Prostate gland (tissue), 2 donors: ENCODE measurements at regions of chr6 and their contacts with region 1.

Region 1: DNA sequence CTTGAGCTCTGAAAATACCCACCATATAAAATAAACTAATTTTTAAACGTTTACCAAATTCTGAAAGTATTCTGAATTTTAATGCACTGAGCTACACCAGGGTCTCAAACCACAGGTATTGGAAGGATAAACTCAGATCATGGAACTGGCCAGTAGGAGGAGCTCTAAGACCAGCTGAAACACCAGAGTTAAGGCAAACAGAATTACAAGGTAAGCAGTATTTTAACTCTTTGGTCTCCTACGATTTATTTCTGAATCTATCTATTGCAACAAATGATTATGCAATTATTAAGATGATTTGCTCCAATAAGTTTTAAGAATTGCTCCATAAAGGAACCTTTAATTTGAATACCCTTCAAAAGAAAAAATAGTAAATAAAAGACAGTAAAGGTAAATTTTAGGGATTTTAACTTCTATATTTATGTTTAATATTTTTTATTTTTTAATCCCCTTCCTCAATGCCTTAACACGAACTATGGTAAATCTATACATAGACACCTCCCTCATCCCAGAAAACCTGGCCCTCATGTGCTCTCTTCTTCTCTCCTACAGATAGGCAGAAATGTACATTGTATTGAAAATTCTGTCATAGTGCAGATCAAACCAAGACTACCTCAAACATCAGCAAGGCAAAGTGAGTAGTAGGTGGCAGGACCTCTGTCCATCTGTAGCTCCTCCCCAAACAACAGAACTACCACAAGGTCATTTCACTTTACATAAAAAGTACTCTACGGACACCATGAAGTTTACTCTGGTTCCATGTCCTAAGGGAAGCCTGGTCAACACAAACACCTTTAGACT is 58.4 kb downstream of the SMLR1 start:
- DNase-seq: peak; percentile 77
- H3K4me3 ChIP-seq: no peak overlapping the region
- H3K27ac ChIP-seq: no peak overlapping the region
- H3K4me1 ChIP-seq: no peaks in the 10 kb centered on the region
- H3K27me3 ChIP-seq: no peaks in the 10 kb centered on the region
- CTCF ChIP-seq: peak; percentile 72 to 93 (median 88)
- POLR2A ChIP-seq: no peak

Region 2: DNA sequence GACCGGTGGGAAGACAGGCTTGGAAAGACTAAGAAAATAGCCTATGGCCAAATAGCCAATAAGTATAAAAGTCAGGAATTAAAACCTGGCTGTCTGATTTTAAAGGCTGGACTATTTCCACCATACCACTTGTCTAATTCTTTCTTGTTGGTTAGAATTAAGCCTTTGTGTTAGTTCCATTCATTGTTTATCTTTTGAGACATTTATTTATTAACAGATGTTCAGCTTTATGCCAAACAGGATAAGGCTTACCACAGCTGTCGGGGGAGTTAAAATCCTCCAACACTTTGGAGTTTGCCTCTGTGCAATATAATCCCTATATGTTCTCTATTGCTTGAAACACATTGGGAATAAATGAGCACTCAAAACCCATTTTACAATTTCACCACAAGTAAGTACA is 311.4 kb before region 1 on chr6:
- intact Hi-C with region 1: no loop called
- DNase-seq: no peak
- H3K4me3 ChIP-seq: no peak overlapping the region
- H3K27ac ChIP-seq: no peak overlapping the region
- H3K4me1 ChIP-seq: no peaks in the 10 kb centered on the region
- H3K27me3 ChIP-seq: no peaks in the 10 kb centered on the region
- CTCF ChIP-seq: no peak
- POLR2A ChIP-seq: no peak

Region 3: GRCh38 chr6:130933712-130934200 is 48.2 kb after region 1 on chr6:
- intact Hi-C with region 1: no loop called
- DNase-seq: no peak
- H3K4me3 ChIP-seq: no peak overlapping the region
- H3K27ac ChIP-seq: no peak overlapping the region
- H3K4me1 ChIP-seq: no peaks in the 10 kb centered on the region
- H3K27me3 ChIP-seq: no peaks in the 10 kb centered on the region
- CTCF ChIP-seq: no peak
- POLR2A ChIP-seq: no peak

Region 4: GRCh38 chr6:130961148-130961547 is 75.6 kb after region 1 on chr6:
- intact Hi-C with region 1: no loop called
- DNase-seq: no peak
- H3K4me3 ChIP-seq: no peak overlapping the region
- H3K27ac ChIP-seq: no peak overlapping the region
- H3K4me1 ChIP-seq: no peaks in the 10 kb centered on the region
- H3K27me3 ChIP-seq: no peaks in the 10 kb centered on the region
- CTCF ChIP-seq: no peak
- POLR2A ChIP-seq: no peak

Region 5: GRCh38 chr6:131063028-131063763 is 177.6 kb after region 1 on chr6 and contains the start of gene EPB41L2:
- intact Hi-C with region 1: loop called (anchors 5 kb)
- DNase-seq: peak; percentile 75
- H3K4me3 ChIP-seq: peak within 1 kb of the TSS; percentile 55 to 75
- H3K27ac ChIP-seq: peak within 1 kb of the TSS; percentile 63 to 80
- H3K4me1 ChIP-seq: no peaks in the 10 kb centered on the region
- H3K27me3 ChIP-seq: no peaks in the 10 kb centered on the region
- CTCF ChIP-seq: peak in 3 of 4 experiments; percentile 10 to 40 (median 35)
- POLR2A ChIP-seq: peak; percentile 86
- total RNA-seq, gene EPB41L2: 11.9 to 105 TPM

Region 6: GRCh38 chr6:131116749-131117360 is 231.3 kb after region 1 on chr6:
- intact Hi-C with region 1: loop called (anchors 2 kb)
- DNase-seq: no peak
- H3K4me3 ChIP-seq: no peak overlapping the region
- H3K27ac ChIP-seq: no peak overlapping the region
- H3K4me1 ChIP-seq: no peaks in the 10 kb centered on the region
- H3K27me3 ChIP-seq: no peaks in the 10 kb centered on the region
- CTCF ChIP-seq: peak in 3 of 4 experiments; percentile 53 to 75 (median 59)
- POLR2A ChIP-seq: no peak

Region 7: GRCh38 chr6:131167773-131168172 is 282.2 kb after region 1 on chr6:
- intact Hi-C with region 1: loop called (anchors 5 kb)
- DNase-seq: no peak
- H3K4me3 ChIP-seq: no peak overlapping the region
- H3K27ac ChIP-seq: no peak overlapping the region
- H3K4me1 ChIP-seq: no peaks in the 10 kb centered on the region
- H3K27me3 ChIP-seq: no peaks in the 10 kb centered on the region
- CTCF ChIP-seq: no peak
- POLR2A ChIP-seq: no peak

Region 8: GRCh38 chr6:131597446-131597845 is 711.9 kb after region 1 on chr6:
- intact Hi-C with region 1: loop called (anchors 10 kb)
- DNase-seq: no peak
- H3K4me3 ChIP-seq: no peak overlapping the region
- H3K27ac ChIP-seq: no peak overlapping the region
- H3K4me1 ChIP-seq: no peaks in the 10 kb centered on the region
- H3K27me3 ChIP-seq: no peaks in the 10 kb centered on the region
- CTCF ChIP-seq: peak in 2 of 4 experiments; percentile 19 to 32
- POLR2A ChIP-seq: no peak